Activated naive CD4-positive, alpha-beta T cell treated with anti-CD3 and anti-CD28 coated beads for 36 hours (primary cell): ENCODE measurements at regions of chr1 and their contacts with region 1.

Region 1: DNA sequence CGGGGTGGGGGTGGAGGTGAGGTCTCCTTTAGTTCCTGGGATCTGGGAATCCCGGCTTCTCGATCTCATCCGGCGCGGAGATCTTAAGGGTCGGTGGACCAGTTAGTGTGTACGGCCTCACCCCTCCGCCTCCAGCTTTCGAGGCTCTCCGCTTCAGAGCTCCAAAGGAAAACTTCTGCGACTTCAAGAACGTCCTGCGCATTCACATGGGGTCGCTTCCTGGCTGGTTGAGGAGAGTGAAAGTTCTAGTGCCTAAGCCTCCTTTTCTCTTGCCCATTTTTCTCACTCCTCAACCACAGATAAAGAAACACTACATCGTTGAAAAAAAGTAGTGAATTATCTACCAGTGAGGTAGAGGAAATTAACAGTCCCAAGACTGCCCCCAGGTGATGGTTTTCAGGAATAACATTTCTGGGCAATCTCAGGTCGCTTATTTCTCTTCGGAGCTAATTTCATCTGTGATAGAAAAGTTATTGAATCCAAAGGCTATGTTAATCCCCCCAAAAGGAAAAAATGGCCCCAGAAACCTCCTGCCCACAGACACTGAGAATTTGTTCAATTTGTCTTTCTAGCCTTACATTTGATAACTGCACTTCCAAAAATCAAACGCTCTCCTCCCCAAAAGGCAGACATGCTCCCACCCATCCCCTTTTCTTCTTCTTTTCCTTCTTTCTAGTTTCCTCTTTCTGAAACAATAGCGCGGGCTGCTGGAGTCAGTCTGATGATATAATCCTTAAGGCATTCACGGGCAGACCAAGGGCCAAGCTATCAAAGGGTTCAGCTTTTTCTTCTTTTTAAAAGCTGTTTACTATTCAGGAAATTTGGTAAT is 20.6 kb upstream of the TBX15 start:
- DNase-seq: peak; percentile 55
- H3K4me3 Mint-ChIP-seq: peak overlapping the region; percentile 46
- H3K27ac Mint-ChIP-seq: no peak overlapping the region
- H3K4me1 Mint-ChIP-seq: peaks cover 13% of the 10 kb centered on the region
- H3K27me3 Mint-ChIP-seq: peaks cover 68% of the 10 kb centered on the region

Region 2: DNA sequence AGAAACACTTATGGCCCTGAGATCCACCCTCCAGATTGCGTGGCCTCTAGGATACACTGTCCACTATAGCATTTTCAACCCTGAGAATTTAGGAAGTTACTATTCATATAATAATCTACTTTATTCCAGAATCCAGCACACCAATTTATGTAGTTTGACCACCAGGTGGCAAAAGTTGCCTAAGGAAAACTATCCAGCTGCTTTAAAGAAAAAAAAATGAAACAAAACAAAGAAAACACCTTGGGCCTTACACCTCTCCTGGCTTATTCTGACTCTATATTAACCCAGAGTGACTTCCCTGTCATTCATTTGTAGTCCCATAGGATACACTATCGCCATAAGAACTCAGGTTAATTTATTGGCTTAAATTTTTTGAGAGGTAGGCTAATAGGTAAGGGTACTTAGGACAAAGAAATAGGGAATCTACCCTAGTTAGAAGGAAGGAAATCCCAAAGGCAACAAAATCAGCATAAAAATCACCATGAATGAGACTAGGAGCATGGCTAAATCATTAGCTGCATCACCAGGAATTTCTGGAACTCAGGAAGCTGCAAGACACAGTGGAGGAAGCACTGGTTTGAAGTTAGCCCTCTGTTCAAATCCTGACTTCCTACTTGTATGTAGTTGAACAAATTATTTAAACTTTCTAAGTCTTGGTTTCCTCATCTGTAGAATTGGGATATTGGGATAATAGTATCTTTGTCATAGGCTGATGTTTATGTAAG is 931.2 kb before region 1 on chr1:
- CTCF ChIA-PET with region 1: no interaction called
- intact Hi-C with region 1: loop called (anchors 1 kb)
- DNase-seq: no peak
- H3K4me3 Mint-ChIP-seq: no peak overlapping the region
- H3K27ac Mint-ChIP-seq: no peak overlapping the region
- H3K4me1 Mint-ChIP-seq: no peaks in the 10 kb centered on the region
- H3K27me3 Mint-ChIP-seq: peaks cover 10% of the 10 kb centered on the region

Region 3: DNA sequence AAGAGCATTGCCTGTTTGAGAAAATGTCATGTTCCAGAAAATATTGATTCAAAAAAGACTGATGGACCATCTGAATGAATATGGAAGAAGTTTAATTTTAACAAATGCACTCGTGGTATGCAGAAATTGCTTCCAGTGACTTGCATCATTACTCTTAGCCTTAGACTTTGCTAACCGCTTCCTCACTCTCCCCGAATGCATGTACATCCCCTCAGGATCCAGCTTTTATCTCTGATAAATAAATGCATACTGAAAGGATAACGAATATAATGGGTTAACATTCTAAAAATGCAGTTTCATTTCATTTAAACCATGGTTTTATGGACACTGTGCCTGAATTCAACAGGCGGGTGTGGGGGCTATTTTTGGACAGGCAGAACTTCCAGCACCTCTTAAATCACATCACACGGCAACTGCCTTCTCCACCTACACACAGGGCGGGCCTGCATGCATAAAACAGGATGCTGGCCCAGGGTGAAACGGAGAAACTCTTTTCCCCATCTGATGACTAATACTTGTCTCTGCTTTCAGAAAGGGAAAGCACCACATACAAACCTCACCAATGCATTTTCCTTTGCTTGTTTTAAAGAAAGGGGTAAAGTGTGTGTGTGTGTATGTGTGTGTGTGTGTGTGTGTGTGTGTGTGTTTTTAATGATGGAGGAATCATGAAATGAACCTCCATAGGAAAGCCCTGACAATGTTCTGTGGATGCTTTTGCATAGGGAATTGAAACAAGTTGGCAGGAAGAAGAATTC is 872.3 kb before region 1 on chr1:
- CTCF ChIA-PET with region 1: no interaction called
- intact Hi-C with region 1: loop called (anchors 1 kb)
- DNase-seq: peak; percentile 72
- H3K4me3 Mint-ChIP-seq: no peak overlapping the region
- H3K27ac Mint-ChIP-seq: no peak overlapping the region
- H3K4me1 Mint-ChIP-seq: peaks cover 9% of the 10 kb centered on the region
- H3K27me3 Mint-ChIP-seq: peaks cover 10% of the 10 kb centered on the region

Region 4: GRCh38 chr1:118151312-118151937 is 857.3 kb before region 1 on chr1:
- CTCF ChIA-PET with region 1: no interaction called
- intact Hi-C with region 1: loop called (anchors 1 kb)
- DNase-seq: peak; percentile 60
- H3K4me3 Mint-ChIP-seq: no peak overlapping the region
- H3K27ac Mint-ChIP-seq: no peak overlapping the region
- H3K4me1 Mint-ChIP-seq: no peaks in the 10 kb centered on the region
- H3K27me3 Mint-ChIP-seq: peaks cover 6% of the 10 kb centered on the region

Region 5: GRCh38 chr1:118984722-118985639 is 23.7 kb before region 1 on chr1:
- CTCF ChIA-PET with region 1: interaction called, 4 read pairs
- intact Hi-C with region 1: loop called (anchors 1 kb)
- DNase-seq: no peak
- H3K4me3 Mint-ChIP-seq: peak overlapping the region; percentile 57
- H3K27ac Mint-ChIP-seq: no peak overlapping the region
- H3K4me1 Mint-ChIP-seq: peaks cover 42% of the 10 kb centered on the region
- H3K27me3 Mint-ChIP-seq: peaks cover 92% of the 10 kb centered on the region

Region 6: GRCh38 chr1:118995312-118996016 is 13.2 kb before region 1 on chr1:
- CTCF ChIA-PET with region 1: interaction called, 11 read pairs
- intact Hi-C with region 1: no loop called
- DNase-seq: no peak
- H3K4me3 Mint-ChIP-seq: no peak overlapping the region
- H3K27ac Mint-ChIP-seq: no peak overlapping the region
- H3K4me1 Mint-ChIP-seq: peaks cover 7% of the 10 kb centered on the region
- H3K27me3 Mint-ChIP-seq: peaks cover 81% of the 10 kb centered on the region

Region 7: GRCh38 chr1:119367427-119368124 is 358.9 kb after region 1 on chr1:
- CTCF ChIA-PET with region 1: interaction called, 3 read pairs
- intact Hi-C with region 1: loop called (anchors 10 kb)
- DNase-seq: no peak
- H3K4me3 Mint-ChIP-seq: no peak overlapping the region
- H3K27ac Mint-ChIP-seq: no peak overlapping the region
- H3K4me1 Mint-ChIP-seq: no peaks in the 10 kb centered on the region
- H3K27me3 Mint-ChIP-seq: peaks cover 25% of the 10 kb centered on the region